ENCODE measurements at regions of chr12 and their contacts with region 1.

Region 1: DNA sequence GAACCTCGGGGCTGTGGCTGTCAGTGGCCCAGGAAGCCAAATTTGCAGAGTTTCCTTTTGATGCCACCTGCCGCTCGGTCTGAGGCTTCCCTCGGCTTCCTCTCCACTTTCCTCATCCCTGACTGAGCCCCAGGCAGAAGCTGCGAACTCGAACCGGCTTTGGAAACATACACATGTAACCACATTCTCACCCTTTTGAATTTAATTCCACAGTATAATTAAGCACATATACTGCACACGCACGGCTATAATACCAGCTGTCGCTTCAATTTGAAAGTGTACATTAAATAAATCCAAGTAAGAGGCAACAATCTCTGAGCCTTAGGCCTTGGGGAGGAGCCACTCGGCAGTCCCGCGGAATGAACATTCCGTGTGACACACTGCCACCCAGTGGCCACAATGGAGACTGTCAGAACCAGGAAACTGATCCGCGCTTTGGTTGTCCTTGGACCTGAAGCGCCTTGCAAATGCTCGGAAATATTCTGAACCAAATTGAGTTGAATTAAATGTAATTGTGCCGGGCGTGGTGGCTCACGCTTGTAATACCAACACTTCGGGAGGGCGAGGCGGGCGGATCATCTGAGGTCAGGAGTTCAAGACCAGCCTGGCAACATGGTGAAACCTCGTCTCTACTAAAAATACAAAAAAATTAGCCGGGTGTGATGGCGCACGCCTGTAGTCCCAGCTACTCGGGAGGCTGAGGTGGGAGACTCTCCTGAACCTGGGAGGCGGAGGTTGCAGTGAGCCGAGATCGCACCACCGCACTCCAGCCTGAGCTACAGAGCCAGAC is 117.9 kb upstream of the TMPO start:
- DNase-seq: peak; percentile 76
- H3K4me3 Mint-ChIP-seq: peak overlapping the region; percentile 77
- H3K27ac Mint-ChIP-seq: peak overlapping the region; percentile 53
- H3K4me1 Mint-ChIP-seq: peaks cover 38% of the 10 kb centered on the region
- H3K27me3 Mint-ChIP-seq: no peaks in the 10 kb centered on the region

Region 2: DNA sequence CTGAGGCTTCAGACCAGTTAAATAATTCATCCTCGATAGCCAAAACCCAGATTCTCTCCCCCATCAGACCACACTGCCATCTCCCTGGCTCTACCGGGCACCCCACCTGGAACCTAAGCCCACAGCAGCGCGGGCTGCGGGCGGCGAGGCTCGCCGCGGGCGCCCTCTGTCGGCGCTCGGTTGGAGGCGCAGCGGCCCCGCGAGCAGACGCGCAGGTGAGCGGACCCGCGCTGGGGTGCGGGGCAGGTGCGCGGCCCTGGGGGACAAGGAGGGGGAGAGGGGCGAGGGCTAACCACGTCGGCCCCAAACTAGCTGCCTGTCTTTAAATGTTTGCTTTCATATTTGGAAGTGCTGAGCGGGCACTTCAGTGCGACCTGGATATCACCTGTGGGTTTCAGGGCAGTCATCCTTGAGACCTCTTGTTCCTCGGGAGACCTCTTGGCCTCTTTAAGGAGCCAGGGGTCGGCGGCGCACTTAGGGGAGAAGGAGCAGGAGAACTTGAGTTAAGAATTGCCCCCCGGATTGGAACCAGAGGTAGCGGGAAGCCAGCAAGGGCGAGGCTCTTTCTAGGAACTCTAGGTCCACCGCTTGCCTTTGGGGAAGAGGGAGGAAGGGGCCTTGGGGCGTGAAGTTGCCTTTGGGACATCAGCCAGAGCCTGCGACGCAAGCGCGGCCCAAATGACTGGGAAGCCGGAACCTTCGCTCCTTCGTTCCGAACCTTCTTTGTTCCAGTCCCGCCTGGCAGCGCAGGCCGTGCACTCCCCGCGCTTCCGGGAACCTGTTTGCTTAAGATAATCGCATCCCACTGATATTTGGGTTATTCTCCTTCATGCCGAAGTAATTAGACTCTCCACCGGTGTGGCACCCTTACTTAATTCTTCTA is 1411.8 kb before region 1 on chr12:
- intact Hi-C with region 1: loop called (anchors 2 kb)
- DNase-seq: peak; percentile 20
- H3K4me3 Mint-ChIP-seq: peak overlapping the region; percentile 60
- H3K27ac Mint-ChIP-seq: no peak overlapping the region
- H3K4me1 Mint-ChIP-seq: no peaks in the 10 kb centered on the region
- H3K27me3 Mint-ChIP-seq: peaks cover 40% of the 10 kb centered on the region

Region 3: DNA sequence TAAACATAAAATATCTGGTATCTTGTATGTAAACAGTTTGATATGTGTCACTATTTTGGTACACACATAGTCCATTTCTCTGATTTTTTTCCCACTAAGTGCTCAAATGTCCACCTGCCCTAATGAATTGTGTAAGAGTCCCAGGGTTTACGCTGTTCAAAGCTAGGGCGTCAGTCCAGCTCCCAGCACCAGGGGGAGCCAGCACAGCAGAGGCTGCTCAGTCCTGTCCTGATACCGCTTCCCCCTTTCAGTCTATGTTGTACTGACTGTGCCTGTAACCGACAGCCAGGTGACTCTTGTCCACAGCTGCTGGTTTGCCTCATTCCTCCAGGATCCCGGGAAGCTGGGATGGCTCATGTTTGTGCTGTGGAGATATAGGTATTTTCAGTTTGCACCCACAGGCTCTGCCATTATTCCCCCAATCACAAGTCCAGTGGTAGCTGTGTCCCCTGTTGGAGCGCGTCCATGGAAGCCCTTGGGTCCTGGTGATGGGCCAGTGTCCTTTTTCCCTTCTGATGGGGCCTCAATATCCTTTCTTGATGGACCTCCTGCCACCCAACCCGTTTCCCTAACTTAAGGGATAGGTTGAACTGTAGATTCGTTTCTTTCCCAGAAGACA is 1248.5 kb before region 1 on chr12:
- intact Hi-C with region 1: loop called (anchors 1 kb)
- DNase-seq: peak; percentile 7
- H3K4me3 Mint-ChIP-seq: no peak overlapping the region
- H3K27ac Mint-ChIP-seq: no peak overlapping the region
- H3K4me1 Mint-ChIP-seq: no peaks in the 10 kb centered on the region
- H3K27me3 Mint-ChIP-seq: peaks cover 13% of the 10 kb centered on the region

Region 4: GRCh38 chr12:97308576-97309198 is 1088.8 kb before region 1 on chr12:
- intact Hi-C with region 1: loop called (anchors 1 kb)
- DNase-seq: no peak
- H3K4me3 Mint-ChIP-seq: no peak overlapping the region
- H3K27ac Mint-ChIP-seq: no peak overlapping the region
- H3K4me1 Mint-ChIP-seq: no peaks in the 10 kb centered on the region
- H3K27me3 Mint-ChIP-seq: peaks cover 6% of the 10 kb centered on the region

Region 5: DNA sequence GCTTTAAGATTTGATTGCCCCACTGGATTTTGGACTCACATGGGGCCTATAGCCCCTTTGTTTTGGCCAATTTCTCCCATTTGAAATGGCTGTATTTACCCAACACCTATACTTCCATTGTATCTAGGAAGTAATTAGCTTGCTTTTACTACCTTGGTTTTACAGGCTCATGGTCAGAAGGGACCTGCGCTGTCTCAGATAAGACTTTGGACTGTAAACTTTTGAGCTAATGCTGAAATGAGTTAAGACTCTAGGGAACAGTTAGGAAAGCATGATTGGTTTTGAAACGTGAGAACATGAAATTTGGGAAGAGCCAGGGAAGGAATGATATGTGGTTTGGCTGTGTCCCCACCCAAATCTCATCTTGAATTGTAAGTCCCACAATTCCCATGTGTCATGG is 301.1 kb before region 1 on chr12:
- intact Hi-C with region 1: no loop called
- DNase-seq: no peak
- H3K4me3 Mint-ChIP-seq: no peak overlapping the region
- H3K27ac Mint-ChIP-seq: no peak overlapping the region
- H3K4me1 Mint-ChIP-seq: no peaks in the 10 kb centered on the region
- H3K27me3 Mint-ChIP-seq: peaks cover 2% of the 10 kb centered on the region

Region 6: GRCh38 chr12:98227162-98227561 is 170.3 kb before region 1 on chr12:
- intact Hi-C with region 1: loop called (anchors 2 kb)
- DNase-seq: no peak
- H3K4me3 Mint-ChIP-seq: no peak overlapping the region
- H3K27ac Mint-ChIP-seq: no peak overlapping the region
- H3K4me1 Mint-ChIP-seq: no peaks in the 10 kb centered on the region
- H3K27me3 Mint-ChIP-seq: peaks cover 6% of the 10 kb centered on the region

Region 7: GRCh38 chr12:98503592-98504367 is 106.3 kb after region 1 on chr12:
- intact Hi-C with region 1: loop called (anchors 2 kb)
- DNase-seq: peak; percentile 90
- H3K4me3 Mint-ChIP-seq: peak overlapping the region; percentile 91
- H3K27ac Mint-ChIP-seq: peak overlapping the region; percentile 99
- H3K4me1 Mint-ChIP-seq: peaks cover 27% of the 10 kb centered on the region
- H3K27me3 Mint-ChIP-seq: peaks cover 8% of the 10 kb centered on the region

Region 8: GRCh38 chr12:98644711-98645402 is 247.3 kb after region 1 on chr12 and contains the starts of genes APAF1 and IKBIP:
- intact Hi-C with region 1: loop called (anchors 10 kb)
- DNase-seq: peak; percentile 96
- H3K4me3 Mint-ChIP-seq: peak within 1 kb of the TSS; percentile 92
- H3K27ac Mint-ChIP-seq: peak within 1 kb of the TSS; percentile 95
- H3K4me1 Mint-ChIP-seq: peaks cover 49% of the 10 kb centered on the region
- H3K27me3 Mint-ChIP-seq: no peaks in the 10 kb centered on the region
- total RNA-seq, gene APAF1: 21.2 and 23.9 TPM in 2 replicates
- total RNA-seq, gene IKBIP: 35.5 and 36.5 TPM in 2 replicates